Astrocyte of the cerebellum (primary cell): ENCODE measurements at regions of chr21 and their contacts with region 1.

Region 1: GRCh38 chr21:15058854-15059263 is 5.9 kb downstream of the NRIP1 start:
- DNase-seq: no peak
- H3K4me3 ChIP-seq: peak overlapping the region; percentile 14
- CTCF ChIP-seq: no peak

Region 2: GRCh38 chr21:14989359-14989758 is 69.5 kb before region 1 on chr21:
- in situ Hi-C with region 1: loop called (anchors 5 kb)
- DNase-seq: no peak
- H3K4me3 ChIP-seq: no peak overlapping the region
- CTCF ChIP-seq: no peak

Region 3: DNA sequence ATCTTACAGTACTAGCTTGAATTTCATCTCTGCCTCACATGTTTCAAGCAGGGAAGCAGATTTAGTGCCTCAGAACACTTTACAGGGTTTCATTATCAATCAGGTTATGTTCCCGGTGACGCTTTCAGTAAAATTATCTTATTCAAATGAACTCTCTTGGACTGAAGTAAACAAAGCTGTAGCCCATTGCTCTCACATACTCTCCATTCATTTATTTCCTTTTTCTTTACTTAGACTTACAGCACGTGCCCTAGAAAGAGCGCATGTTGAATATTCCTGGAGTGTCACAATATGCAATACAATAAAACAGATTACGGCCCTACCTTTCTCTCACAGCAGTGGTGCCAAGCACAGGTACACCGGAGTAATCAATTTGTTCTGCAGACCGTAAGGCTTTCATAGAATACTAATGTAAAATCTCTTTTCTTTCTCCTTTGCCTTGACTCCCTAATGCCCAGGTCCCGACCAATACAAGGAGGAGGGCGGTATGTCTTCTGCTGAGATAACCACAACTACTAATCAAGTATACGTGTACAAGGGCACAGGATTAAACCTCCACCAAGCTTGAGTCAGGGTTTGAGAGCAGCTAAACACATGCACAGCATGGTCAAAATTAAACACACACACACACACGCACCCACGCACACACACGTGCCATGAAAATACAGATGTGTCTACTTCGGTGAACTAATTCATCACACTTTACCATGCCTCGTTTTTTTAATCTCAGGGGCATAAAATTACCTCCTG is 56.8 kb before region 1 on chr21:
- in situ Hi-C with region 1: no loop called
- DNase-seq: no peak
- H3K4me3 ChIP-seq: no peak overlapping the region
- CTCF ChIP-seq: no peak

Region 4: DNA sequence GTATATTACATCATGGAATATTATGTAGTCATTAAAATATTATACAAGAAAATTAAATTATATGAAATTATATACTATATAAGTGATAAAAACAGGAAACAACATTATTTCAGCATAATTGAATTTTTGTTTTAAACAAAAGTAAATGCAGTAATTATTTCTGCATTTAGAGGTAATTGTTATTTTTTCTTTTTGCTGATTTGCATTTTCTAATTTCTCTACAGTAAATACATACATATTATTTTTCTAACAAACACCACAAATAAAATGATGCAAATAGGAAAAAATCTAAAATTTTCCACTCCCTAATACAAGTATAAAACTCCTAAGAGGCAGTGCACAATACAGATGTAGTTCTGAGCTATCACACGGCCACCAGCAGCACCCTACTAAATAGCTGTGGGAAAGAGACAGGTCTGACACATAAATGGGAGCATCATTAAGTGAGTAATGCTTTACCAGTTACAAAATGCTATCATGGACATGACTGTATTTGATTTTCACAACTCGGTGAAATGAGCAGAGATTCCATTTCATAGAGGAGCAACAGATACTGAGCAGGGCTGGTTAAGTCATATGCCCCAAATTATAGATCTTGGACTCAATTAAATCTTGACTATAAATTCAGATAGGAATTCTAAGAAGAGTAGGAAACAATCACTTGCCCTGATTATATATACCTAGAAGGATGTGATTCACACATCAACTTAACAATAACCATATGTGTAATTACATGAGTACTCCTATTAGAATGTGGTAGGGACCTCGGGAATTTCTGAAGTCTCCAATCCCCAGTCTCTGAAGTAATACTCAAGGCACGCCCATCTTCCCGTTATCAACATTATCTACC is 43.0 kb before region 1 on chr21:
- in situ Hi-C with region 1: no loop called
- DNase-seq: no peak
- H3K4me3 ChIP-seq: no peak overlapping the region
- CTCF ChIP-seq: no peak

Region 5: GRCh38 chr21:15084668-15085067 is 25.8 kb after region 1 on chr21:
- in situ Hi-C with region 1: no loop called
- DNase-seq: no peak
- H3K4me3 ChIP-seq: no peak overlapping the region
- CTCF ChIP-seq: no peak

Region 6: DNA sequence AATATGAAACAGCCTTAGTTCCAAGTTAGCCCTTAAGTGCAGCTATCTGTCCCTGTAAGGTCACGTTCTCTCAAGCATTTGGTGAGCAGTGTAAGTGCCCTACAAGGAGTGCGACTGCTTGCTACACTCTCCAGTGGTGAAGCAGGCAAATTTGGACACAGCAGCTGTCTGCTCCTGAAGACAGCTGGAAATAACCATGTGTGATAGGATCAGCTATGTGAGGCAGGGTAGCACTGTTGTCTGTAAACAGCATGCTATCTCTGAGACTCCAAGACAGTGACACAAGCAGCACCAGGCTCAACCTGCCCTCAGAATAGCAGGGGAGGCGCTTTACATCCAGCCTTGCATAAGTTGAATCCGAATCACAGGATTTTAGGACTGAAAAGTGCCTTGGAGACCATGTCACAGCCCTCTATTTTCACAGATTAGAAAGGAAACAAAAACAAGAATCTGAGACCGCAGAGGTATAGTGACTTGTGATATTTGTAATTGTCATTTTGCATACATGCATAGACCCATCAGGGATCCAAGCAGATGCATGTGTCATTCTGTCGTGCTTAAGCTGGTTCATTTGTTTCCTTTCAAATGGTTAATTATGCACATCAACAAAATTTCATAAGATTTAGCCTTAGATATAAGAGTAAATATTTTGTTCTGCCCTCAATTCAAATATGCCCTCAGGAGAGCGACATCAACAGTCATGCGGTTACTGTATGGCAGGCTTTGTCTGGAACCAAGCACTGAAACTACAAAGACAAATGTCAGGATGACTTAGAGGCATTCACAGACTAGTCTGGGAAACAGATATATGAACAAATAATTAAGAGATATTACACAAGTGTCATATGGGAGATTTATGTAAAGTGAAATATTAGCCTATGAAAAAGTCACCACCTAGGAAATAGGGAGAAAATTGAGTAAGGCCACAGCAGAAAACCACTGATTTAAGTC is 140.8 kb after region 1 on chr21:
- in situ Hi-C with region 1: no loop called
- DNase-seq: no peak
- H3K4me3 ChIP-seq: no peak overlapping the region
- CTCF ChIP-seq: no peak